BJ (cell line): ENCODE measurements at regions of chr17 and their contacts with region 1.

Region 1: DNA sequence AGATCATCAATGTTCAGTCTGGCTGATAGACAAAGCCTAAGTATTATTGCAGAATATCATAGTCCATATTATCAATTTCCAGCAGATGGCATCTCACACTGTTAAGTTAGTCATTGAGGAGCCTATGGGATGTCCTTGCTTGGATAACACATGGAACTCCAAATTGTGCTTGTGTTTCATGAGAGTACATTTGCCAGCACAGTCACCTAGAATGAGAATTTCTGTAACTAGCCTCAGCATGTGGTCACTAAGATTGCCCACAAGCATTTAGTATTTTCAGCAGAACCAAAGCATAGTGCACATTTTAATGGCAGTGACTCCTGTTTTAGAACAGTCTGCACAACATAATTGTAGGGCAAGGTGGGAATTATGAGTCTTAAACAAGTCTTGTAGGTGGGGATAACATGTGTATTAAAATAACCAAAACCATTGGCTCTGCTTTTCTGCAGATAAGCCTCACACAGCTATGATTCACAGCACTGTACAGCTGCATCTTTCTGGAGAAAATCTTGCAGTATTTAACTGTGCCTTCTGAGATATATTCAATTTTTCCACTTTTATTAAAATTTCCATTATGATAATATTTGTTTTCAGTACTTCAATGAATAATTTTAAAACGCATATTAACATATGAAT is 882.8 kb upstream of the SOX9 start:
- DNase-seq: no peak
- H3K4me3 ChIP-seq: no peak overlapping the region
- H3K27me3 ChIP-seq: no peaks in the 10 kb centered on the region
- CTCF ChIP-seq: peak; percentile 45

Region 2: DNA sequence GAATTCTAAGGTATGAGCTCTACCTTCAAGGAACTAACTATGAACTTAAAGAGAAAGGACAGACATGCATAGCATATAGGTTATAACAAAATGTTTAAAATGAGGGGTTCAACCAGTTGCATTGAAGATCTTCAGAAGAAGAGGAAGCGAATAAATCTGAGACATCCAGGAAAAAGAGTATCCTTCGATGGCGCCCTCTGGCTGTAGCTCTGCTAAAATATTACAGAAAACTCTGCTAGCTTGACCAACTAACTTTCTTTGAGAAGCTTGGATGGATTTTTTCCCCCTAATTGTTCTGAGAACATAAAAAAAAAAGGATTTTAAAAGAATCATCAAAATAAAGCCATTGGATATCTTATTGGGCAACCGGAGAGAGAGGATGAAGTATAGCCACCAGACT is 222.9 kb after region 1 on chr17:
- CTCF ChIA-PET with region 1: interaction called, 10 read pairs
- POLR2A ChIA-PET with region 1: no interaction called
- DNase-seq: no peak
- H3K4me3 ChIP-seq: no peak overlapping the region
- H3K27me3 ChIP-seq: no peaks in the 10 kb centered on the region
- CTCF ChIP-seq: peak; percentile 57

Region 3: GRCh38 chr17:72030067-72030899 is 792.3 kb after region 1 on chr17:
- CTCF ChIA-PET with region 1: no interaction called
- POLR2A ChIA-PET with region 1: no interaction called
- DNase-seq: no peak
- H3K4me3 ChIP-seq: peak overlapping the region; percentile 47
- H3K27me3 ChIP-seq: no peaks in the 10 kb centered on the region
- CTCF ChIP-seq: peak; percentile 67